Kidney (tissue), 22 donors: ENCODE measurements at regions of chr5 and their contacts with region 1.

Region 1: DNA sequence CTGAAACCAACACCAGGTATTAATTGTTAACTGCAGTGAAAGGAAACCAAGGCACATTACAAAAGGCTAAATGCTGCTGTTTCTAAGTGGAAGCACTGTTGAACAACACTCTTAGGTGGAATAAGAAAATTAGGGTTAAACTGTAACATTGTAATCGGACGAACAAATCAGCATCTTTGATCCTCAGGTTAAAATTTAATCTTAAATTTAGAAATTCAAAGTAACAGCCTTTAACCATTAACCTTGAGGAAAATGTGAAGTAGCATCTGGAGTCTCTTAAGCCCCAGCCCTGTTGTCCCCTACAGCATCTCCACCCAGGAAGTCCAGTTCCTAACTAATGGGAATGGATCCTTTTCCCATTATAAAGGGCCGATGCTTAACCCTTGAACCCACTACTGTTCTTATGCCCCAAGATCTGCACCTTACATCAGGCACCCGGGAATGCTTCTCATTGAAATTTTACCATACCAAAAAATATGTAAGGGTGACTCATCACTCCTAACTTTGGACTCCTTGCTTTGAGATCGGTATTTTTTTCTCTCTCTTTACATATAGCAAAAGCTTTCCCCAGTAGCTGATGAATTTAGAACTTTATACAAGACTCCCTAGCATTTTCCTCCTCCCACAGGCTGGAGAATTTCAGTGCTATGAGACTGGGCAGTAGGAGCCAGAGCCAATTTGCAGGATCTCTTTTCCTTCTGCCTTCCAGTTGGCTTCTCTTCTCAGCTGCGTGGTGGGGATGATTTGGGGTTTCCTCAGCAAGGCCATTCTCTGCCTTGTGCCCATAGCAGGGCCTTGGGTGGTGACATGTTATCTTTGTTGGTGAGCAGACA is 32.0 kb upstream of the ITGA2 start:
- DNase-seq: peak in 2 of 5 donors; percentile 58
- H3K4me3 ChIP-seq: no peak overlapping the region
- H3K27ac ChIP-seq: peak overlapping the region in 1 of 2 donors; percentile 36
- H3K4me1 ChIP-seq: peaks cover 0 to 12% (median 5%) of the 10 kb centered on the region in 3 donors
- H3K27me3 ChIP-seq: no peaks in the 10 kb centered on the region
- CTCF ChIP-seq: no peak

Region 2: GRCh38 chr5:52605317-52606313 is 351.5 kb before region 1 on chr5:
- intact Hi-C with region 1: no loop called
- DNase-seq: no peak
- H3K4me3 ChIP-seq: no peak overlapping the region
- H3K27ac ChIP-seq: no peak overlapping the region
- H3K4me1 ChIP-seq: no peaks in the 10 kb centered on the region
- H3K27me3 ChIP-seq: no peaks in the 10 kb centered on the region
- CTCF ChIP-seq: no peak

Region 3: DNA sequence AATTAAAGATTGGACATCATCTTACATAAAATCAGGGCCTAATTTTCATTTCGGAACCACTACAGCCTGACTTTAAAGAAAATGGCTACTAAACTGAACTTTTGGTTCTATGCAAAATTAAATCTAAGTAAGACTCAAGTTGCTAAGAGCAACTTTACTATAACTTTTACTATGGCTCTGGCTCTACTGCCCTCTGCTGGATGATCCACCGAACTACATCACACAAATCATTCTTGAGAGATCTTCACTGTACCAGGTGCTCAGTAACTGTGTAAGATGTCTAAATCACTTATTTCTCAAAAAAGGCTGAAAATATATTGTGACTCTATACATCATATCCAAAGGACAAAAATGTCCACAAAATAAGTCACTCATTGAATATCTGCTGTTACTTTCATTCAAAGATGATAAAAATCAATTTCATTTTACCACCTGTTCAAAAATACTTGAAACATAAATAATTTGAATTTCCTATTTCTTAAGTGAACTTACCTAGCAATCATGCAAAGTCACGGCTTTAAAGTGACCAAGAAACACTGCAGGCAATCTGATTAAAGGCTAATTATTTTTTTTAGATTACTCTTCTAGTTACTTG is 138.9 kb after region 1 on chr5:
- intact Hi-C with region 1: loop called (anchors 10 kb)
- DNase-seq: peak in 4 of 5 donors; percentile 64 to 78 (median 74)
- H3K4me3 ChIP-seq: no peak overlapping the region
- H3K27ac ChIP-seq: no peak overlapping the region
- H3K4me1 ChIP-seq: peaks cover 3 to 16% (median 6%) of the 10 kb centered on the region in 3 donors
- H3K27me3 ChIP-seq: no peaks in the 10 kb centered on the region
- CTCF ChIP-seq: peak; percentile 91